ENCODE measurements at regions of chr9 and their contacts with region 1.

Region 1: GRCh38 chr9:15889555-15889954 is 336.7 kb downstream of the CCDC171 start:
- ATAC-seq: no peak
- H3K4me3 ChIP-seq: no peak overlapping the region
- H3K27ac ChIP-seq: no peak overlapping the region
- H3K4me1 ChIP-seq: no peaks in the 10 kb centered on the region

Region 2: DNA sequence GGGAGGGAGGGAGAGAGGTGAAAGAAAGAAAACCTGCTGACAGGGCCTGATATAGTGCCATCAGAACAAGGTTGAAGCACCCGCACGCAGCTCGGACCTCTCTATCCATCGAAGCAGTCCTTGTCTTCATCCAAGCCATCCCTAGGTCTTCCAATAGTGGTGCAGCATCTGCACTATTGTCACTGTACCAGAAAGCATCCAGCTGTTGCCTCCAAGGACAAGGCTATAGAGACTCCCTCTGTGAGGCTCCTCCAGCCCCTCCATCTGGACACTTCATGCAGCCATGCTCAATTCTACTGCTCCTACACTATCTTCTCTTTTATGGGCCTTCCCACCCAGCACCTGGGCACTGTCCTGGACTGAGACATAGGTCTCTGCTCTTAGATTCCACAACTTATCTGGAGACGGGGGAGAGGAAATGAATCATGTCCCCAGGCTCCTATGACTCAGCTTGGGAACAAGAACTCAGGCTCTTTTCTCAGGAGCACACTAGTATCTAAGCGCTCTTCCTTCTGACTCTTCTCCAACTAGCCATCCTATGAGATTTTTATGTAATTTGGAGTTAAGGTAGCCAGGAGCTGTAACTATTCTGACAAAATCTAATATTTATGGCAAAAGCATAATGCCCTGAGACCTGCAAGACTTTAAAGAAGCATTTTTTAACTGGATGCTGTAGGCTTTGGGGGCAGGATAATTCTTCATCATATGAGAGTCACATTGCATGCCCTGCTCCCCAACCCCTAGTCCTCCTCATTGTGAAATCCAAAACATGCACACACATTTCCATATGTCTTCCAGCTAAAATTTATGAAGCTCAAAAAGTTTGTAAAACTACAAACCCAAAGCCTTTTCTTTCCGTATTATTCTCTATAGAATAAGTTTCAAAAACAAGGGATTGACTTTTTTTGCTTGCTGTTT is 110.1 kb after region 1 on chr9:
- in situ Hi-C with region 1: loop called in 1 of 9 experiments (anchors 25 kb)
- ATAC-seq: peak in 3 of 8 experiments; percentile 36 to 95 (median 94)
- H3K4me3 ChIP-seq: no peak overlapping the region
- H3K27ac ChIP-seq: no peak overlapping the region
- H3K4me1 ChIP-seq: no peaks in the 10 kb centered on the region

Region 3: DNA sequence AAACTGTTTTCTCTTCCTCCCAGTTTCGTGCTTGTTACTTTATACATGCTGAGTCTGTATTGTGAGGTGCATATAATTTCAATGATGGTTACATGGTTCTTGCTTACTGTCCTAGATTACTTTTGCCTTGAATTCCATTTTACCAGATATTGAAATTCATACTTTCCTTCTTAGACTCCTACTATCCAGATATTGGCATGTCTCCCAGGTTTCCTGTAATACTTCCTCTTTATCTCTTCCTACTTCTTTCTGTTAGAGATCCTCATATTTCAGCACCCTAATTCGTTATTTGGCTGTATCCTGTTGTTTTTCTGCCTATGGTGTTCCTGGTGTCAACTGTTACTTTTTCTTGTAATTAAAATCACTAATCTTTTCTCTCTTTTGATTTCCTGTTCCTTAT is 185.4 kb after region 1 on chr9:
- in situ Hi-C with region 1: no loop called
- ATAC-seq: no peak
- H3K4me3 ChIP-seq: no peak overlapping the region
- H3K27ac ChIP-seq: no peak overlapping the region
- H3K4me1 ChIP-seq: peaks cover 14 to 16% of the 10 kb centered on the region in 2 donors

Region 4: DNA sequence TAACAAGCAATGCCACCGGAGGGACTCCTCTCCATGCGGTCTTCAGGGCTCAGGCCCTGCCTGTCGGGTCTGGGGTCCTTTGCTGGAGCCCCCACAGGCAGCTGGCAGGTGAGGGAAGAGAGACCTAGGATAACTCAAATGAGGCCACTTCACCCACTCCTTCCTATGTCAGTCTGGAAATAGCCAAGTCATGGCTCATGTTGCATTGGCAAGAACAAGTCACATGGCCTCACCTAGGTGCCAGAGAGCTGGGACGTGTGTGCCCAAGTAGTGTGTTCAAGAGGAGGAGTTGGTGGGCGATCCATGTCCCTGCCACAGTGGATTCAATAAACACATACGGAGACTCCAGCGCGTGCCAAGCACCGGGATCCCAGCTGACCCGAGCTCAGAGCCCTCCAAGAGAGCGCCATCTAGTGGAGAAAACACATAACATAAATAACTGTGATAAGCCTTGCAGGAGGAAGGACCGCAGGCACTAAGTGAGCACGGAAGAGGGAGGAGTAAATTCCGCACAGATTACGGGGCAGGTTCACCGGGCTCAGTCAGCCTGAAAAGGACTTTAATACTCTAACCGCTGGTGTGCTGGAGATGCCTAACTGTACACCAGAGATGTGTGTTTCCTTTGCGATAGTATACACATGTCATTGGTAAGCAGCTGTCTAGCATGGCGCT is 244.1 kb after region 1 on chr9:
- in situ Hi-C with region 1: loop called in 1 of 9 experiments (anchors 25 kb)
- ATAC-seq: peak in 7 of 8 experiments; percentile 29 to 86 (median 42)
- H3K4me3 ChIP-seq: no peak overlapping the region
- H3K27ac ChIP-seq: no peak overlapping the region
- H3K4me1 ChIP-seq: peaks cover 0 to 7% of the 10 kb centered on the region in 2 donors

Measured in motor neuron (in vitro differentiated cells).